Activated T-helper 1 cell treated with anti-CD3 and anti-CD28 coated beads, Interleukin-12 subunit alpha, Interleukin-12 subunit beta, Interleukin-2, Interleukin-4 antibody, amounts not matched to agents 30 ng/mL and 10 ng/mL and 1 ng/mL, durations not matched to agents 14 hours and 24 hours and 36 hours (primary cell): ENCODE measurements at regions of chr10 and their contacts with region 1.

Region 1: GRCh38 chr10:31928549-31929260 is at the start of gene ARHGAP12:
- DNase-seq: peak; percentile 68
- H3K4me3 Mint-ChIP-seq: peak within 1 kb of the TSS; percentile 88
- H3K27ac Mint-ChIP-seq: peak within 1 kb of the TSS; percentile 73
- H3K4me1 Mint-ChIP-seq: peaks cover 56% of the 10 kb centered on the region
- H3K27me3 Mint-ChIP-seq: peaks cover 13% of the 10 kb centered on the region
- total RNA-seq, gene ARHGAP12: 2.4 and 3.5 TPM in 2 replicates

Region 2: GRCh38 chr10:31940839-31941653 is 12.3 kb after region 1 on chr10:
- intact Hi-C with region 1: loop called (anchors 2 kb)
- DNase-seq: no peak
- H3K4me3 Mint-ChIP-seq: no peak overlapping the region
- H3K27ac Mint-ChIP-seq: no peak overlapping the region
- H3K4me1 Mint-ChIP-seq: peaks cover 5% of the 10 kb centered on the region
- H3K27me3 Mint-ChIP-seq: peaks cover 5% of the 10 kb centered on the region

Region 3: GRCh38 chr10:32005050-32005449 is 76.3 kb after region 1 on chr10:
- intact Hi-C with region 1: loop called (anchors 5 kb)
- DNase-seq: peak; percentile 17
- H3K4me3 Mint-ChIP-seq: no peak overlapping the region
- H3K27ac Mint-ChIP-seq: no peak overlapping the region
- H3K4me1 Mint-ChIP-seq: peaks cover 15% of the 10 kb centered on the region
- H3K27me3 Mint-ChIP-seq: no peaks in the 10 kb centered on the region